Activated B cell treated with CpG ODN at 0.5 μM for 24 hours (primary cell): ENCODE measurements at regions of chr19 and their contacts with region 1.

Region 1: DNA sequence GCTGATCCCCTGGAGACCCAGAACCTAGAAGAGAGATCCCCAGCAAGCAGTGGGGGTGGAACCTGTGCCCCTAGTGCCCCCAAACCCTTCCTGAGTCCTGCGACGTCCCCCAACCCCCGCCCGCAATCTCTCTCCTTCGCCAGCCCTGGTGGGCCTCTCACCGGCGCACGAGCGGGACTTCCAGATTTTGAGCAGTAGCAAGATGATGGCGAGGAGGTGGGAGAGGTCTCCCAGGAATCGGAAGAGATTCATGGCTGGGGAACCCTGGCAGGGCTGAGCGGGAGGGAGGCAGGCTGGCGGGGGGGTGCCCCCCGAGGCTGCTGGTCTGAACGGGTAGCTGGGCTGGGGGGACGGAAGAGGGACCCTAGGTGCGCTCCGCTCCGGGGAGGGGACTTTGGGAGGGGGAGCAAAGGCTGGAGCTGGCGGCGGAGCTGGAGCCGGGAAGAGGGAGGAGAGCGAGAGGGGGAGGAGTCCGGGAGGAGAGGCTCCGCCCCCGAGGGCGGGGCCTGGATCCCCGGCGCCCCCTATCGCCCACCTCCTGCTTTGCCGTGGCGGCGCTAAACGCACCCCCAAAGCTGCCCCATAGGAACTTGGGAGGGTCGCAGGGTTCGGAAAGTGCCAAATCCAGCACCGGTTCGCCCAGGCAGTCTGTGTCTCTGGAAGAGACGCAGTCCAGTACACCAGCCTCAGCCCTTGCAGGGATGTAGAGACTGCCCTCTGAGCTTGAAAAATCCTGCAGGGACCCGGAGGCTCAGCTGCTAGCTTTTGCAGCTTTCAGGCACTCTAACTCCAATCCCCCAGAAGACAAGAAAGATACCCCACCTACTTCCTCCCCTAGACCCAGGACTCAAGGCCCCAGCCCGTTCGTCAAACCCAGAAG is at the start of gene KDELR1:
- DNase-seq: peak; percentile 83
- ATAC-seq: peak; percentile 84
- H3K4me3 Mint-ChIP-seq: peak within 1 kb of the TSS; percentile 96
- H3K27ac Mint-ChIP-seq: peak within 1 kb of the TSS; percentile 88
- H3K4me1 Mint-ChIP-seq: peaks cover 35% of the 10 kb centered on the region
- H3K27me3 Mint-ChIP-seq: peaks cover 19% of the 10 kb centered on the region
- CTCF ChIP-seq: peak; percentile 51
- total RNA-seq, gene KDELR1: 50.8 and 51.9 TPM in 2 replicates

Region 2: GRCh38 chr19:47324502-47324901 is 1066.8 kb before region 1 on chr19:
- CTCF ChIA-PET with region 1: no interaction called
- POLR2A ChIA-PET with region 1: no interaction called
- intact Hi-C with region 1: no loop called
- DNase-seq: no peak
- ATAC-seq: no peak
- H3K4me3 Mint-ChIP-seq: no peak overlapping the region
- H3K27ac Mint-ChIP-seq: no peak overlapping the region
- H3K4me1 Mint-ChIP-seq: peaks cover 3% of the 10 kb centered on the region
- H3K27me3 Mint-ChIP-seq: peaks cover 20% of the 10 kb centered on the region
- CTCF ChIP-seq: no peak

Region 3: DNA sequence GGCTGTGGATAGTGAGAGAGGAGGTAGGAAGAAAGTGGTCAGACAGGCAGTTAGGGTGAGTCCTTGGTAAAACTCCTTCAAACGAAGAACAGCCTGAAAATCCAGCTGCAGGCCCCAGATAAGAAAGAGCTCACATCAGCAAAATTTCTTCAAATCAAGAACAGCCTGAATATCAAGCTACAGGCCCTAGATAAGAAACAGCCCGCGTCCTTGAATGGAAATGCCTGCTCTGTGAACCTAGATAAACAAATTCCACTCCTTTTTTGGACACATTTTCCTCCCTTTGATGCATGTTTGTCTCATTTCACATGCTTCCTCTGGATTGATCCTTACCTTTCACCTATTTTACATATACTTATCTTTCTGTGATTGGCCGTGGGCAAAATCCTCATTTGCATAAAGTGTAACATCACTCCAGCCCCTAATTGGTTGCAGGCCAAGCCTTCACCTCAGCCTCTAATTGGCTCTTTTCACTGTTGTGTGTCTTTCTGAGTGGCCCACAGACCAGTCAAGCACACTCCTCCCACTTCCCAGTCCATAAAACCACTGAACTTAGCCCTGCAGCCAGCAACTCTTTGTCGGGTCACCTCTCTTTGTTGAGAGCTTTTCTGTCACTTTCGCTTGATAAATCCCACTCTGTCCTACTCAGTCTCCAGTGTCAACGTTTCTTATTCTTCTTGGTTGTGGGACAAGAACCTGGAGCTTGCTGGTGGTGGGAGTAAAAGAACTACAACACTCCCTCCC is 499.3 kb before region 1 on chr19:
- CTCF ChIA-PET with region 1: no interaction called
- POLR2A ChIA-PET with region 1: no interaction called
- intact Hi-C with region 1: no loop called
- DNase-seq: no peak
- ATAC-seq: no peak
- H3K4me3 Mint-ChIP-seq: no peak overlapping the region
- H3K27ac Mint-ChIP-seq: no peak overlapping the region
- H3K4me1 Mint-ChIP-seq: no peaks in the 10 kb centered on the region
- H3K27me3 Mint-ChIP-seq: no peaks in the 10 kb centered on the region
- CTCF ChIP-seq: no peak

Region 4: GRCh38 chr19:48433337-48433736 is 42.0 kb after region 1 on chr19:
- CTCF ChIA-PET with region 1: no interaction called
- POLR2A ChIA-PET with region 1: interaction called, 11 read pairs
- intact Hi-C with region 1: no loop called
- DNase-seq: no peak
- ATAC-seq: no peak
- H3K4me3 Mint-ChIP-seq: no peak overlapping the region
- H3K27ac Mint-ChIP-seq: no peak overlapping the region
- H3K4me1 Mint-ChIP-seq: no peaks in the 10 kb centered on the region
- H3K27me3 Mint-ChIP-seq: peaks cover 20% of the 10 kb centered on the region
- CTCF ChIP-seq: no peak

Region 5: GRCh38 chr19:48468775-48469288 is 77.5 kb after region 1 on chr19:
- CTCF ChIA-PET with region 1: no interaction called
- POLR2A ChIA-PET with region 1: no interaction called
- intact Hi-C with region 1: loop called (anchors 2 kb)
- DNase-seq: peak; percentile 95
- ATAC-seq: peak; percentile 88
- H3K4me3 Mint-ChIP-seq: peak overlapping the region; percentile 90
- H3K27ac Mint-ChIP-seq: peak overlapping the region; percentile 94
- H3K4me1 Mint-ChIP-seq: peaks cover 27% of the 10 kb centered on the region
- H3K27me3 Mint-ChIP-seq: no peaks in the 10 kb centered on the region
- CTCF ChIP-seq: no peak

Region 6: GRCh38 chr19:48513289-48514122 is 122.2 kb after region 1 on chr19:
- CTCF ChIA-PET with region 1: no interaction called
- POLR2A ChIA-PET with region 1: no interaction called
- intact Hi-C with region 1: loop called (anchors 5 kb)
- DNase-seq: peak; percentile 51
- ATAC-seq: peak; percentile 90
- H3K4me3 Mint-ChIP-seq: no peak overlapping the region
- H3K27ac Mint-ChIP-seq: peak overlapping the region; percentile 69
- H3K4me1 Mint-ChIP-seq: peaks cover 17% of the 10 kb centered on the region
- H3K27me3 Mint-ChIP-seq: peaks cover 2% of the 10 kb centered on the region
- CTCF ChIP-seq: no peak